Posterior vena cava (tissue), 2 donors: ENCODE measurements at regions of chr1 and their contacts with region 1.

Region 1: DNA sequence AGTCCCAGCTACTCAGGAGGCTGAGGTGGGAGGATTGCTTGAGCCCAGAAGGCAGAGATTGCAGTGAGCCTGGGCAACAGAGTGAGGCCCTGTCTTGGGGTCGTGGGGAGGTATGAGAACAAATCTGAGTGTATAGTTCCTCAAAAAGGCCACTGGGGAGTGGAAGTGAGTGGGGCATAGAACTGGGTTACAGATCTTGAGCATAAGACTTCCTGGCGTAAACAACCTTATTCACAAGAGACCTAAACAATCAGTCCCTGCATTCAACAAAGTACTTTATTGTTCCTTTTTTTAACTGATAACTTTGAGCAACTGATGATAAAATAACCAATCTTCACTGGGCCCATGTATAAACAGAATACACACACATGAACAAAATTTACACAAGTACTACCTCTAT is 72.7 kb upstream of the MUTYH start:
- DNase-seq: no peak

Region 2: DNA sequence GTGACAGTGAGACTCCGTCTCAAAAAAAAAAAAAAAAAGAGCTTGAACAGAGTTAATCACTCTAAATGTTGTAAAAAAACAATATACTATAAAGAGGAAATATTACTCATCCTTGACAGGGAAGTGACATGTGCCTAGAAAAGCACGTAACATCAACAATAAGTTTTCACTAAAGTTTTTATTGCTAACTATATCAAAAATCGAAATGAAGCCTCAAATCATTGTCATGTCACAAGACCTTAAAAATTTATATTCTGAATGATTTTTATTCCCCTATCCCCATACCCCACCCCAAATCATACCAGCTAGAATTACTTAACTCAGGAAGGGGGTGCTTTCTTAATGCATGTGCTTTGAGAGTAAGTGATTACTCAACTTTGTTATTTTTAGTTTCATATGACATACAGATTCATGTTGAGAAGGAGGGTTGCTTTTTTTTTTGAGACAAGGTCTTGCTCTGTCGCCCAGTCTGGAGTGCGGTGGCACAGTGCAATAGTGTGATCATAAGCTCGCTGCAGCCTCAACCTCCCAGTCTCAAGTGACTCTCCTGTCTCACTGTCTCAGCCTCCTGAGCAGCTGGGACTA is 19.1 kb before region 1 on chr1:
- intact Hi-C with region 1: loop called in 1 of 2 experiments (anchors 2 kb)
- DNase-seq: no peak